Aorta (tissue), 5 donors: ENCODE measurements at regions of chr11 and their contacts with region 1.

Region 1: GRCh38 chr11:118791111-118791965 is at the start of gene DDX6:
- DNase-seq: peak; percentile 96 to 98
- ATAC-seq: peak; percentile 94
- H3K4me3 ChIP-seq: peak within 1 kb of the TSS; percentile 71 to 93
- H3K27ac ChIP-seq: peak within 1 kb of the TSS; percentile 71 to 81
- H3K4me1 ChIP-seq: peaks cover 0 to 2% of the 10 kb centered on the region in 2 donors
- H3K27me3 ChIP-seq: no peaks in the 10 kb centered on the region
- total RNA-seq, gene DDX6: 105 to 128 TPM

Region 2: GRCh38 chr11:118689851-118690552 is 101.3 kb before region 1 on chr11:
- intact Hi-C with region 1: loop called (anchors 5 kb)
- DNase-seq: peak; percentile 95 to 97
- ATAC-seq: peak; percentile 97
- H3K4me3 ChIP-seq: no peak overlapping the region
- H3K27ac ChIP-seq: peak overlapping the region in 1 of 2 donors; percentile 27
- H3K4me1 ChIP-seq: no peaks in the 10 kb centered on the region
- H3K27me3 ChIP-seq: no peaks in the 10 kb centered on the region

Region 3: DNA sequence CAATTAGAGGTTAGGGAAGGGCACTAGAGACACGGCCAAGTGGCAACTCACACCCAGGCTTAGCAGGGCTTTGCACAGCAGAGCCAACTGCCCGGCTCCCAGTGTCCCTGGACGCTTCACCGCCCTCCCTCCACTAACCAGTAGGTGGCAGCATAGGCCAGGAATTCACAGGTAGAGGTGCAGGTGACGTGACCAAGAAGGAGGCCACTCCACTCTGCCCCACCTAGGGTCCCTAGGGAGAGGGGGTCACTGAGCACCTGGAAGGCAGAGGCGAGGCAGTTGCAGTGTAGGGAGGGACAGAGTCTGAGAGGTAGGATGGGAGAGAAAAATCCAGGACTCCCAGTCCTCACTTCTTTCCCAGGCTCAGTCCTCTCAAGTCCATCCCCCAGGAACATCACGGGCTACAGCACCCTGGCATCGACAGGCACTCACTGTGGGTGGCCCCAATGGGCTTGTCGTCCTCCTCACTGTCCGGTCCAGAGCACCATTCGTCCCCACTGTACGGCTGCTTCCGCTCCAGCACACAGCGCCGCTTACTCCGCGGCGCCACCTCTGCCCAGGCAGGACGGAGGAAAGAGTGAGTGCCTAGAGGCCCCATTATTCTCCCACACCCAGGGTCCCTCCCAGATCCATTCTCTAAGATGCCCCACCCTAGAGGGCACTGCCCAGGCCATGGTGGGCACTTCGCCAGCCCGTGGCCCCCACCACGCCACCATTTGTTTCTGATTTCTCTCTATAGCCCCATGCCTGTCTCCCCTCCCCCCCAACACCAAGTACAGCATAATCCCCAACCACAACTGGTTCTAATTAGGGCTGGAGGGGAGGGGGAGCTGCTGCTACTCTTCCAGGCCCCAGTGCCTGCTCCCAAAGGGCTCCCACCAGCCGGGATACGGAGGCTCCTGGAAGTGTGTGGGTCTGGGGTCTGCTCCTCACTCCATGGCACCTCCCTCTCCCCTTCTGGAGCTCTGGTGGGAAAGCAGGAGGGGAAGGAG is 116.0 kb after region 1 on chr11:
- intact Hi-C with region 1: loop called in 1 of 2 experiments (anchors 5 kb)
- DNase-seq: peak; percentile 85 to 93
- ATAC-seq: peak; percentile 66
- H3K4me3 ChIP-seq: no peak overlapping the region
- H3K27ac ChIP-seq: peak overlapping the region in 1 of 2 donors; percentile 11
- H3K4me1 ChIP-seq: no peaks in the 10 kb centered on the region
- H3K27me3 ChIP-seq: no peaks in the 10 kb centered on the region

Region 4: GRCh38 chr11:118928108-118928870 is 137.0 kb after region 1 on chr11:
- intact Hi-C with region 1: loop called (anchors 5 kb)
- DNase-seq: peak; percentile 94 to 95
- ATAC-seq: peak; percentile 89
- H3K4me3 ChIP-seq: peak overlapping the region; percentile 67 to 80
- H3K27ac ChIP-seq: peak overlapping the region; percentile 81 to 89
- H3K4me1 ChIP-seq: no peaks in the 10 kb centered on the region
- H3K27me3 ChIP-seq: no peaks in the 10 kb centered on the region